BJ (cell line): ENCODE measurements at regions of chr12 and their contacts with region 1.

Region 1: DNA sequence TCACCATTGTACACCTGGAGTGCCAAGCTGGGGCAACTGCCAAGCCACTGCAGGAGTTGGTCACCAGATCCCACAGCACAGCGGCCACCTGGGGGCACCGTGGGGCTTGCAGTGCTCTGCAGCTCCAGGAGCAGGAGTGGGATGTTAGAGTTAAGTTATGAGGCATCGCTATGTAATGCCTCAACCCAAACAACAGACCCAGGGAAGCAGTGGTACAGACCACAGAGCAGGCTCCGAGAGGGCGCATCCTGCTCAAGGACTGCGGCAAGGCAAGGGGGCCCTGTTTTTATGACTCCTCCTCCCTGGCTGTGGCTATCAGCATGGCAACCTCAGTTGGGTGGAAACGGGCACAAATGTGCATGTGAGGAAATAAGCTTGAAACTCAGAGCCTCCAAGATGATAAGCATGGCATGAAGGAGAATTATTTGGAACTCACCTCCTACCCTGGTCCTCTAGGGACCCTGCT is 63.1 kb downstream of the ARL6IP4 start:
- DNase-seq: peak; percentile 58
- H3K4me3 ChIP-seq: no peak overlapping the region
- H3K27me3 ChIP-seq: no peaks in the 10 kb centered on the region; the same call in 1 of the 2 replicates
- CTCF ChIP-seq: peak; percentile 92

Region 2: DNA sequence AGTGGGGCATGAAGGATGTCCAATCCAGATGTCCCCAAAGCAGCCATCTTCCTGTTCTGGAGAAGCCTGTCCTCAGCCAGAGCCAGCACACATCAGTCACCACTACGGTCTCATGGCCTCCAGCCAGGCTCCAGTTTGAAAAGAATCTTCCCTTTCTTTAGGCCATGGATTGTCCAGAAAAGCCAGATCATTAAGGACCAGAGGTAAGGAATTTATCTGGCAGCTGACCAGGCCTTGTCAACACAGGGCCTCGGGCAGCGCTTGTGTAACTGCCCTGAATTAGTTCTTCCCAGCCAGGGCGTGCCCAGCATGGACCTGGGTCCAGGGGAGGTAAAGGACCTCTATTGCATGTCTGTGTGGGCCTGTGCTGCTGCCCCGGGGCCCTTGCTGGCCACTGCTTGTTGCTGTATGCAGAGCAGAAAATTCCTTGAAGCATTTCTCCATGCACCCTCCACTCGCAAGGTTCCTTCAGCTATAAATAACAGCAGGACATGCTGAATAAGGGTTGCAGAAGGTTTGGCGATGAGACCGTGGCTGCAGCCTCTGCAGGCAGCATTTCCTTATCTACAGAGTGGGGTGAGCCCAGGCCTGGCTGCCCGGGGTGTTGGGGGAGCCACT is 126.0 kb before region 1 on chr12:
- CTCF ChIA-PET with region 1: no interaction called
- POLR2A ChIA-PET with region 1: no interaction called
- DNase-seq: peak; percentile 35
- H3K4me3 ChIP-seq: no peak overlapping the region
- H3K27me3 ChIP-seq: no peaks in the 10 kb centered on the region
- CTCF ChIP-seq: no peak

Region 3: GRCh38 chr12:122935318-122935717 is 108.3 kb before region 1 on chr12:
- CTCF ChIA-PET with region 1: no interaction called
- POLR2A ChIA-PET with region 1: no interaction called
- DNase-seq: no peak
- H3K4me3 ChIP-seq: no peak overlapping the region
- H3K27me3 ChIP-seq: no peaks in the 10 kb centered on the region
- CTCF ChIP-seq: no peak

Region 4: DNA sequence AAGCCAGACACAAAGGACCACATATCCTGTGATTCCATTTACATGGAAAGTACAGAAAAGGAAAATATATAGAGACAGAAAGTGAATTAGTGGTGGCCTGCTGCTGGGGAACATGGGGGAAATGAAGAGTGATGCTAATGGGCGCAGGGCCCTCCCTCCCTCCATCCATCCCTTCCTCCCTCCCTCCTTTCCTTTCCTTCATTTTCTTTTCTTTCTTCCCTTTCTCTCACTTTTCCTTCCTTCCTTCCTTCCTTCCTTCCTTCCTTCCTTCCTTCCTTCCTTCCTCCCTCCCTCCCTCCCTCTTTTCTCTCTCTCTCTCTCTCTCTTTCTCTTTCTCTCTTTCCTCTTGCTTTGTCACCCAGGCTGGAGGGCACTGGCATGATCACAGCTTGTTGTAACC is 25.8 kb before region 1 on chr12:
- CTCF ChIA-PET with region 1: interaction called, 5 read pairs
- POLR2A ChIA-PET with region 1: interaction called, 11 read pairs
- DNase-seq: no peak
- H3K4me3 ChIP-seq: no peak overlapping the region
- H3K27me3 ChIP-seq: peaks cover 2% of the 10 kb centered on the region
- CTCF ChIP-seq: no peak

Region 5: GRCh38 chr12:123024819-123025391 is 18.7 kb before region 1 on chr12:
- CTCF ChIA-PET with region 1: interaction called, 12 read pairs
- POLR2A ChIA-PET with region 1: interaction called, 8 read pairs
- DNase-seq: no peak
- H3K4me3 ChIP-seq: no peak overlapping the region
- H3K27me3 ChIP-seq: peaks cover 3% of the 10 kb centered on the region
- CTCF ChIP-seq: no peak

Region 6: DNA sequence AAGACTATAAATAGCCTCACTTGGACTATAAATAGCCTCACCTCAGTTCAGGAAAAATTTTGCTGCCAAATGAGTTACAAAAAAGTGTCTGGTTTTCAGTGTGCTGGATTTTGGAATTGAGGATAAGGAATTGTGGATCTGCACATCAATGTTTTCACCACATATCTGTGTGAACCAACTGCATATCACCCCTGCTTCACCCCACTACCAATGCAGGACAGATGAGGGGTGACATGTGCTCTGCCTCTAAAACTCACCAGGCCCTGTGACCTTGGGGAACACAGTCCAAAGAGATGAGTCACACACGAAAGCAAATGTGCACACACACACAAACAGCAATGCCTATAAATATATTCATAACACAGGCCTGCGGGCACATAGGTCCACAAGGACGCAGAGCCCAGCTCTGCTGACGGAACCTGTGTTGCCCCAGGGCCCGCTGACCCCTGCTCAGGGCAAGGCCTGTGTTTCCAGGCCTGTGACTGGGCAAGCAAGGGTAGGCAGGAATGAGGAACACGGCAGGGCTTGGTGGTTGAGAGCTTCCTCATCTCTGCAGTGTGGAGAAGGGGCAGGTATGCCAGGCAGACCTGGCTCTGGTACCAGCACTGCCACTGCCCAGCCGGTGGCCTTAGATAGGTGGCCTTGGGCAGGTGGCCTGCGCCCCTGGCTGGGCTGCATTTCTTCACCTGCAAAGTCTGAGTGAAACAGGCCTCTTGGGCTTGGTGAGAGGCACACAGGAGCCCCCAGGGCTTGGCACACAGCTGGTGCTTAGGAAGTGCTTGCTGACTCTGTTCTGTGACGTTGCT is 19.3 kb after region 1 on chr12:
- CTCF ChIA-PET with region 1: interaction called, 11 read pairs
- POLR2A ChIA-PET with region 1: no interaction called
- DNase-seq: no peak
- H3K4me3 ChIP-seq: no peak overlapping the region
- H3K27me3 ChIP-seq: no peaks in the 10 kb centered on the region; the same call in 1 of the 2 replicates
- CTCF ChIP-seq: no peak

Region 7: GRCh38 chr12:123150744-123151456 is 107.3 kb after region 1 on chr12 and contains the start of gene PITPNM2:
- CTCF ChIA-PET with region 1: interaction called, 28 read pairs
- POLR2A ChIA-PET with region 1: no interaction called
- DNase-seq: no peak
- H3K4me3 ChIP-seq: peak within 1 kb of the TSS; percentile 57
- H3K27me3 ChIP-seq: no peaks in the 10 kb centered on the region; the same call in 1 of the 2 replicates
- CTCF ChIP-seq: no peak
- polyA plus RNA-seq, gene PITPNM2: 0.83 and 1.3 TPM in 2 replicates

Region 8: GRCh38 chr12:123232807-123233543 is 189.4 kb after region 1 on chr12 and contains the starts of genes MPHOSPH9 and MTRFR:
- CTCF ChIA-PET with region 1: interaction called, 156 read pairs
- POLR2A ChIA-PET with region 1: interaction called, 4 read pairs
- DNase-seq: peak; percentile 98
- H3K4me3 ChIP-seq: peak within 1 kb of the TSS; percentile 85
- H3K27me3 ChIP-seq: no peaks in the 10 kb centered on the region
- CTCF ChIP-seq: no peak
- polyA plus RNA-seq, gene MPHOSPH9: 7.6 and 13.1 TPM in 2 replicates
- polyA plus RNA-seq, gene MTRFR: 11.6 and 12.7 TPM in 2 replicates

Region 9: DNA sequence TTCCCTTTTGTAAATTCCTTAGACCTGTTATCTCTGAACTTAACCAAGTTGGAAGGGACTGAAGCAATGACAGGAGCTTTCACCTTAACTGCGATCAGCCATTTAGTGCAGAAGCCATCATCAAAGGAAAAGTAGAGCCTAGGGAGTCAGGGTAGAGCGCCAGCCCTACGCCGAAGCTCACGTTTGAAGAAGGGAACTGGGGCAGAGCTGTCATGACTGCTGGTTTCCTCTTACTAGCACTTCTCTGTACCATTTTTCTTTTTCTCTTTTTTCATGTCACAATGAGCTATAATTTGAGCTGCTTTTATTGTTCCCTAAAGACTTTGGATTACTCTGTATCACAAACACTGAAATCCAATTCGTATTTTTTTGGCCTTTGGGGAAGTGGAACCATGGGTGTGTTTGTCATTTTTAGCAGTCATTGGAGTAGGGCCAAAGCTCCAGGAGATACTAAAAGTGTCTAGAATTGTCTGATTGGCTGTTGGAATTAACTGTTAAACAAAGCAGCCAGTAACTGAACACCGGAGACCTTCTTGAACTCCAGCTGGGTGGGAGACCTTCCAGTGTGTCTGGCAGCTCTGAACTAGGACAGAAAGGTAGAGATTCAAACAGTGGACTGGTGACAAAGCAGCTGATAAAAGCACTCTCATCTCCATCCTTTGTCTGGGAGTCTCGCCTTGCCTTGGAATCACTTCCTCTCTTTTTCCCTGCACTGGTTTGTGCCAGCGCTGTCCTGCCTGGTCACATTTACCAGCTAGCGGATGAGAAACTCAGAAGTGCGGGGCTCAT is 198.7 kb after region 1 on chr12:
- CTCF ChIA-PET with region 1: interaction called, 156 read pairs
- POLR2A ChIA-PET with region 1: no interaction called
- DNase-seq: no peak
- H3K4me3 ChIP-seq: no peak overlapping the region
- H3K27me3 ChIP-seq: no peaks in the 10 kb centered on the region
- CTCF ChIP-seq: no peak